ENCODE measurements at regions of chr15 and their contacts with region 1.

Region 1: DNA sequence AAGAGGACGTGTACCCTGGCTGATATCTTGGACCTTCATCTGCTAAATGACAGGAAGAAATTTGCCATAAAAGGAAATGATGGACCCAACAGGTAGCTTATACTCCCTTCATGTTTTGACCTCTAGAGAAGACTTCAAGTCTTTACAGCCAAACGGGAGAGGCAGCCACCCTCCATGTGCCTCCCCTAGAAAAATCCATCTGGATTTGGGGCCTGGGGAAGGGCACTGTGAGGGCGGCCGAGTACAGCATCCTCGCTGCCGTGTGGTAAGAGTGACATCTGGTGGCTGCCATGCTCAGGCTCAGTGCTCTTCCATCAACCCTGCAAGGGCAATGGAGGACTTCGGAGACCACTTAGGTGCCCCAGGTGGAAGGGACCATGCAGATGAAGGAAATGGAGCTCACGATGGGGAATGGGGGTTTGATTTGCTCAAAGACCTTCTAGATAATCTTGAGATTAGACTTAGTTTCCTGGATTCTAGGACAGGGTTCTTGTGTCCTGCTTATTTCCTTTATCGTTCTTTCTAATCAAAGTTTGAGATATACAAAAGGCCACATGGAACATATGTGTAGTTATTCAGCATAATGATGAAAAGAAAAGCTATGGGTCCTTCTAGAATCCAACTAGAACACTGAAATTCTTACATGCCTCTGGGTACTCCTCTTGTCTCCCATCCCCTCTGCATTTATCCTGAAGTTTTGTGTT is 44.4 kb downstream of the AQP9 start:
- DNase-seq: peak; percentile 39 to 76 (median 72)
- ATAC-seq: peak; percentile 90 to 94
- H3K4me3 ChIP-seq: no peak overlapping the region
- H3K27ac ChIP-seq: no peak overlapping the region
- H3K4me1 ChIP-seq: no peaks in the 10 kb centered on the region
- H3K27me3 ChIP-seq: no peaks in the 10 kb centered on the region

Region 2: DNA sequence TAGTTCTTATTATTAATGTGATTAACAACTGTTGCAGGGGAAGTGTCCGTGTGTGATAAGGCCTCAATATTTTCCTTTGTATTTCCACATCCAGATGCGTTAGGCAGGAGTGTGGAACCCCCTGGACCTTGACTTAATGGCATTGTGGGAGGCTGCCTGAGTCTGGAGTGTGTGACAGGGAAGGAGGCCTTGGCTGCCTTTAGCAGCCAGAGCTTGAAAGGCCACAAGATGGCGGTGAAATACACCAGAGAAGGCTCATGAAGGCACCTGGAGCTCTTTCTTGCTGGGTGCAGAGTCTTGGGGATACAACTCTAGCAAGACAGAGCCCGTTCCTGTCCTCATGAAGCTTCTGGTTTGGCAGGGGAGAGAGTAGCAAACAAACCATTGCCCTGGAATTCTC is 439.2 kb before region 1 on chr15:
- intact Hi-C with region 1: loop called in 1 of 4 experiments (anchors 10 kb)
- DNase-seq: no peak
- ATAC-seq: peak in 1 of 2 donors; percentile 24
- H3K4me3 ChIP-seq: no peak overlapping the region
- H3K27ac ChIP-seq: no peak overlapping the region
- H3K4me1 ChIP-seq: no peaks in the 10 kb centered on the region
- H3K27me3 ChIP-seq: no peaks in the 10 kb centered on the region

Region 3: DNA sequence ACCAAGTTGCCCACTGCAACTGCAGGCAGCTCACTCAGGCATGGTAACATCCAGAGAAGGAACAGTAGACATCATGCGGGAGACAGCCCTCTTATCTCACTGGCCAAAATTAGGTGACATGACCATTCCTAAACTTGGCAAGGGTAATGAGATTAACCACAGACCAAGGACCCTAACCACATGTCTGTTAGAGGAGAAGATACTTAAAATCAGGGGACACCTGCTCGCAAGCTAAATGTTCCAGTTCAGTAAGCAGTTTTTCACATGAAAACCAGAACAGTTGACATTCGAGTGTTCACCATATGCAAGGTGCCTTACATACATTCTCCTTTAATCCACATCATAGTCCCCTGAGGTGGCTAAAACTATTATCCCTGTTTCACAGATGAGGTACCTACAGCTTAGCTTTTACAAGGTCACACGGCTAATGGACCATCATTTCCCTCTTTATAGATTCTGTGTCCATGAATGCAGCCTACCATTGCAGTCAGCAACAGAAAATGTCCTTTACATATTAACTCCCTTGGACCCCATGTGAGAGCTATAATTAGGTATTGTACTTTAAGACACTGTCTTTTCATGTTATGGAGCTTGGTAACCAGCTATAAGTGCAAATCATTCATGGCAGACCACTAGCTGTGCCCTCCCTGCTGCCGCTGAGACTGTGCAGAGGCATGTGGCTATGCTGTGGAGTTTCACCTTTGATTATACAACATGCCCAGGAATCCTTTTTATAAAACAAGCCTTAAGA is 403.3 kb after region 1 on chr15:
- intact Hi-C with region 1: no loop called
- DNase-seq: no peak
- ATAC-seq: no peak
- H3K4me3 ChIP-seq: no peak overlapping the region
- H3K27ac ChIP-seq: no peak overlapping the region
- H3K4me1 ChIP-seq: peaks cover 2% of the 10 kb centered on the region
- H3K27me3 ChIP-seq: no peaks in the 10 kb centered on the region

Measured in right cardiac atrium (tissue), 5 donors.